Psoas muscle (tissue), 8 donors: ENCODE measurements at regions of chr5 and their contacts with region 1.

Region 1: GRCh38 chr5:179023528-179024430 is at the start of gene ZNF879:
- DNase-seq: peak; percentile 94 to 97
- ATAC-seq: peak; percentile 99 to 100 (median 100)
- H3K4me3 ChIP-seq: peak within 1 kb of the TSS; percentile 88
- H3K27ac ChIP-seq: peak within 1 kb of the TSS; percentile 93
- H3K4me1 ChIP-seq: peaks cover 8% of the 10 kb centered on the region
- H3K27me3 ChIP-seq: no peaks in the 10 kb centered on the region
- CTCF ChIP-seq: no peak
- total RNA-seq, gene ZNF879: 2.7 to 3.8 (median 3.0) TPM

Region 2: GRCh38 chr5:178204895-178205748 is 818.7 kb before region 1 on chr5:
- intact Hi-C with region 1: loop called in 1 of 2 experiments (anchors 5 kb)
- DNase-seq: peak; percentile 86 to 88
- ATAC-seq: peak; percentile 48 to 57 (median 52)
- H3K4me3 ChIP-seq: peak overlapping the region; percentile 95
- H3K27ac ChIP-seq: peak overlapping the region; percentile 96
- H3K4me1 ChIP-seq: peaks cover 19% of the 10 kb centered on the region
- H3K27me3 ChIP-seq: no peaks in the 10 kb centered on the region
- CTCF ChIP-seq: no peak

Region 3: DNA sequence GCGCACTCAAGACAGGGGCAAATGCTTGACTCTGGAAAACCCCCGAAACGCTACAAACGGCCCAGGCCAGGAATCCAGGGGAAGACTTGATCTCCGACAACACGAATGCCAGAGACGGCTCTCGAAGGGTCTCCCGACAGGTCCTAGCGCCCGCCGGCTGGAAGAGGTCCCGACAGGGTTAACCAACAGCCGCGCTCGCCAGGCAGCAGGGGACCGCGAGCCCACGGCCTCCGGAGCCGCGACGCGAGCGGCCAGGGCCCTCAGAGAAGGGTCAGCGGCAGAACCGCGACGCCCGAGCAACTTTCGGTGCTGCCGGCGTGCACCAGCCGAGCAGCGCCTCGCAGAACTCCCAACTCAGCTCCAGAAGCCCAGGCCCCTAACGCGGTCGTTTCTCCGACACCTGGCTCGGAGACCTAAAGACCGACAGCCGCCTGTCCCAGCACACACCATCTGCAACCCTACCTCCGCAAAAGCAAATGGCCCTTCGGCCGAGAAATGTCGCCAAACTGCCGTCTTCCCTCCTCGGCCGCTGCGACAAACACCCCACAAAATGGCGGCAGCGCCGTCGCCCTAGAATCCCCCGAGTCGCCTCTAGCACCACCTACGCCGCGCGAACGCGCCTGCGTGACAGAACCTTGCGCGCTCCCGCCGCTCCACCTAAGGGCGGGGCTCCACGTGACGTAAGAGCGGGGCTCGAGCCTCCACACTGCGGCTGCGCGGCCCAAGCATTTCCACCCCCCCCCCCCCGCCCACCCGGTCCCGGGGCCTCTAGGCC is 397.1 kb before region 1 on chr5 and contains the start of gene CLK4:
- intact Hi-C with region 1: loop called in 1 of 2 experiments (anchors 5 kb)
- DNase-seq: peak; percentile 96 to 99
- ATAC-seq: peak; percentile 94 to 97 (median 95)
- H3K4me3 ChIP-seq: peak within 1 kb of the TSS; percentile 85
- H3K27ac ChIP-seq: peak within 1 kb of the TSS; percentile 97
- H3K4me1 ChIP-seq: peaks cover 32% of the 10 kb centered on the region
- H3K27me3 ChIP-seq: no peaks in the 10 kb centered on the region
- CTCF ChIP-seq: no peak
- total RNA-seq, gene CLK4: 15.1 to 31.5 (median 17.8) TPM

Region 4: GRCh38 chr5:178859625-178860531 is 163.9 kb before region 1 on chr5 and contains the start of gene ZNF354B:
- intact Hi-C with region 1: loop called in 1 of 2 experiments (anchors 5 kb)
- DNase-seq: peak; percentile 90 to 93
- ATAC-seq: peak; percentile 97 to 100 (median 100)
- H3K4me3 ChIP-seq: peak within 1 kb of the TSS; percentile 96
- H3K27ac ChIP-seq: peak within 1 kb of the TSS; percentile 91
- H3K4me1 ChIP-seq: peaks cover 6% of the 10 kb centered on the region
- H3K27me3 ChIP-seq: no peaks in the 10 kb centered on the region
- CTCF ChIP-seq: peak; percentile 11
- total RNA-seq, gene ZNF354B: 5.5 to 7.2 (median 6.1) TPM

Region 5: GRCh38 chr5:178895651-178896571 is 127.9 kb before region 1 on chr5 and contains the start of gene ZFP2:
- intact Hi-C with region 1: loop called in 1 of 2 experiments (anchors 10 kb)
- DNase-seq: peak; percentile 64 to 76
- ATAC-seq: peak; percentile 86 to 98 (median 95)
- H3K4me3 ChIP-seq: peak within 1 kb of the TSS; percentile 89
- H3K27ac ChIP-seq: peak within 1 kb of the TSS; percentile 54
- H3K4me1 ChIP-seq: no peaks in the 10 kb centered on the region
- H3K27me3 ChIP-seq: no peaks in the 10 kb centered on the region
- CTCF ChIP-seq: no peak
- total RNA-seq, gene ZFP2: 0.71 to 1.6 (median 1.2) TPM

Region 6: GRCh38 chr5:178931846-178932760 is 91.7 kb before region 1 on chr5:
- intact Hi-C with region 1: no loop called
- DNase-seq: no peak
- ATAC-seq: no peak
- H3K4me3 ChIP-seq: no peak overlapping the region
- H3K27ac ChIP-seq: no peak overlapping the region
- H3K4me1 ChIP-seq: no peaks in the 10 kb centered on the region
- H3K27me3 ChIP-seq: no peaks in the 10 kb centered on the region
- CTCF ChIP-seq: no peak

Region 7: GRCh38 chr5:179060116-179061008 is 36.6 kb after region 1 on chr5 and contains the start of gene ZNF354C:
- intact Hi-C with region 1: loop called in 1 of 2 experiments (anchors 5 kb)
- DNase-seq: peak; percentile 92 to 94
- ATAC-seq: peak; percentile 97 to 100 (median 100)
- H3K4me3 ChIP-seq: peak within 1 kb of the TSS; percentile 82
- H3K27ac ChIP-seq: peak within 1 kb of the TSS; percentile 79
- H3K4me1 ChIP-seq: peaks cover 10% of the 10 kb centered on the region
- H3K27me3 ChIP-seq: no peaks in the 10 kb centered on the region
- CTCF ChIP-seq: no peak
- total RNA-seq, gene ZNF354C: 2.2 to 3.7 (median 2.7) TPM

Region 8: DNA sequence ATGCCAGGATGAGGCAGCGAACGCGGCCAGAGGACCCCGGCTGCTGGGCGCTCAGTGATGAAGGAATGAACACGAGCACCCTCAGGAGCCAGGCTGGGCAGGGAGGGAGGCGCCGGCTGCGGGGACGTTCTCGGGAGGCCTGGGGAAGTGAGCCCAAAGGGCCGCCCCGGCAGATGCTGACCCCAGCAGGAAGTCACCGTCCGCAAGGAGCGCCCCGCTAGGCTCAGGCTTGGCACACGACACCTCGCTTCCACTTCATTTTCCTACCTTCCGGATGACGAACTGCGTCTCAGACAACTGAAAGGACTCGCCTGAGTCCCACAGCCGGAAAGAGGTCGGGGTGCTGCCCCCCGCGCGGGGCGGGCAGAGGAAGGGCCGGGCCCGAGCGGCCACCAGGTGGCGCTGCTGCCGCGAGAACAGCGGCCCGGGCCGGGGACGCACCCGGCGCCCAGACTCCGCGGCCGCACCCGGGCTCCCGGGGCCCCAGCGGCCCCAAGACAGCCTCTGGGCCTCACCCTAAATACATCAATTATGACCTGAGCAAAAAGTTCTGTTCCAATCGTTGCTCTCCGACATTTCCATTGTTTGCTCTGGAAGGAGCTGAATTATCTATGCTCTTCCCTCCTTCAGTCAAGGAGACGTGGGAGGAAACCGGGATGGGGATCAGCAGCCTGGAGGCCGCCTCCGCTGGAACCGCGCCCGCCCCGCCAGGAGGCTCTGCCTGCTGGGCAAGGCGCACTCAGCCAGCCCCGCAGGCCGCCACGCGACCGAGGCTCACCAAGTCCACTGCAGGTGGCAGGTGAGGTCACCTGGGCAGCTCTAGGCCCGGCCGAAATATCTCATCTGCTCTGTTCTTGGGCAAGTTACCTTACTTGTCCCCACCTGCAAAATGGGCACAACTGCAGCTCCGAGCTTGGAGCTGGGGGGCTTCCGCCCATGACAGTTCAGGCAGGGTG is 143.4 kb after region 1 on chr5:
- intact Hi-C with region 1: no loop called
- DNase-seq: peak; percentile 58 to 68
- ATAC-seq: peak; percentile 61 to 92 (median 82)
- H3K4me3 ChIP-seq: peak overlapping the region; percentile 49
- H3K27ac ChIP-seq: no peak overlapping the region
- H3K4me1 ChIP-seq: no peaks in the 10 kb centered on the region
- H3K27me3 ChIP-seq: peaks cover 0 to under 1% (median 0%) of the 10 kb centered on the region in 3 donors
- CTCF ChIP-seq: peak; percentile 99